ENCODE measurements at regions of chr19 and their contacts with region 1.

Region 1: DNA sequence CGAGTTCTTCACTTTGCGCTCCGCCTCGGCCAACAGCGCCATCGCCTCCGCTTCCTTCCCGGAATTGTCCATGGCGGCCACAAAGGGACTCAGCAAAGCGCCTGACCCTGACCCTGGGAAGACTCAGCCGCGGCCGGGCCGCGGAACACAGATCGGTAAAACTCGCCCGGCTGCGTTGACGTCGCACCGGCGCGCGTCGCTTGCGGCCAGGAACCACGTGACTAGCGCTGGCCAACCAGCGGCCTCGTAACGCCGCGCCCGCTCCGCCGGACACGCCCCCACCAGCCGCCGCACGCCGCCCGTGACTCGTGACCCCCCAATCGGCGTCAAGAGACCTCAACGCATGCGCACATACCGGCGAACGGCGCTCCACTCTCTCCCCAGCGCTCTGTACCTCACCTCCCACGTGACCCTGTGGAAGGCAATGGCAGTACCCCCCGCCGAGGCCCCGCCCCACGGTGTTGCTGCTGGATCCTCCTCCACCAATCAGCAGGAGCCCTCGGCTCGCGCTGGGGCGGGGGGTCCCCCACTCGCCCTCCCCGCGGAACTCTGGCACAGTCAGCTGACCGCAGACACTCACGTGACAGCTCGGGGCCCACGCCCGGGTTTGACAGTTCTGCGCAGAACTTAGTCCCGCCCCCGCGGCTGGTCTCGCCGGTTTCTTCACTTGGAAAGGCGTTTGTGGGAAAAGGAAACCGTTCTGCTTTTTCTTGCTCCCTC is at the start of gene NAPA:
- DNase-seq: peak; percentile 100
- ATAC-seq: peak; percentile 98
- H3K4me3 Mint-ChIP-seq: peak within 1 kb of the TSS; percentile 98
- H3K27ac Mint-ChIP-seq: peak within 1 kb of the TSS; percentile 98
- H3K4me1 Mint-ChIP-seq: peaks cover 75% of the 10 kb centered on the region
- H3K27me3 Mint-ChIP-seq: no peaks in the 10 kb centered on the region
- CTCF ChIP-seq: no peak
- total RNA-seq, gene NAPA: 43.9 to 47.2 TPM

Region 2: DNA sequence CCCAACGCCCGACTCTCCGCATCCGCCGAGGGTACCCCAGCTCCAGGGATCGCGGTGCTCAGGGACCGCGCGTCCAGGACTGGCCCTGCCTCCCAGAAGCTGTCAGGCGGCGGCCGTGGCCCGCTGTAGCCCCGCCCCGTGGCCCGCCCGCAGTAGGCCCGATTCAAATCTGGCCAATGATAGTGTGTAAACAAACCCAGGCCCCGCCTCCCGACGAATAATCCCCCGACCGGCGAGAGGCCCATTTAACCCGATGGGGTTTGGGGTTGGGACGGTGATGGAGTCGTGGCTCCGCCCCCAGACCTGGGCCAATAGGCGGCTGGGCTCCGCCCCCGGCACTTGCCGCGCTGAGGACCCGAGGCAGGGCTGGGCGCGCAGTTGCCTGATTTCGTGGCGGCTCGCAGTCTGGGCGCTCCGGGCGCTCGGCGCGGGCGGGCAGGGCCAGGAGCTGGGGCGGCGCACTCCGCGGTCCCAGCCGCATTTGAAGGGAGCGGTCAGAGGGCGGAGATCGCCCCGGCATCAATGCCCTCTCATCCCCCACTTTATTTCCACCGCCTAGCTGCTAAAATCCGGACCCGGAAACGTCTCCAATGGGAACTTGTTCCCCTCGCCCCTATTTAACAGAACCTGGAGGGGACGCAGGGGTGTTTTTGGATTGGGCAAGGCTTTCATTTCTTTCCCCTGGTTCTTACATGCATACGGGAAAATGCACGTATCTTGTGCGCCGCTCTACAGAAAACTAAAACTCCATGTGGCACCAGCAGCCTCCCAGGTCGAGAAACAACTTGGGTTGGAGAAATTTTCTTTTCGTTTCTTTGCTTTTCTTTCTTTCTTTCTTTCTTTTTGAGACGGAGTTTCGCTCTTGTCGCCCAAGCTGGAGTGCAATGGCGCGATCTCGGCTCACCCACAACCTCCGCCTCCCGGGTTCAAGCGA is 85.5 kb after region 1 on chr19:
- CTCF ChIA-PET with region 1: interaction called, 11 read pairs
- POLR2A ChIA-PET with region 1: interaction called, 11 read pairs
- intact Hi-C with region 1: loop called (anchors 5 kb)
- DNase-seq: peak; percentile 100
- ATAC-seq: peak; percentile 97
- H3K4me3 Mint-ChIP-seq: peak overlapping the region; percentile 86
- H3K27ac Mint-ChIP-seq: peak overlapping the region; percentile 85
- H3K4me1 Mint-ChIP-seq: peaks cover 28% of the 10 kb centered on the region
- H3K27me3 Mint-ChIP-seq: no peaks in the 10 kb centered on the region
- CTCF ChIP-seq: no peak

Measured in activated CD8-positive, alpha-beta T cell treated with anti-CD3 and anti-CD28 coated beads for 36 hours (primary cell).